Mucosa of descending colon (tissue), 3 donors: ENCODE measurements at regions of chr9 and their contacts with region 1.

Region 1: GRCh38 chr9:78357165-78357873 is 60.4 kb downstream of the PSAT1 start:
- DNase-seq: no peak
- ATAC-seq: no peak
- H3K4me3 ChIP-seq: no peak overlapping the region
- H3K4me1 ChIP-seq: no peaks in the 10 kb centered on the region
- CTCF ChIP-seq: no peak

Region 2: DNA sequence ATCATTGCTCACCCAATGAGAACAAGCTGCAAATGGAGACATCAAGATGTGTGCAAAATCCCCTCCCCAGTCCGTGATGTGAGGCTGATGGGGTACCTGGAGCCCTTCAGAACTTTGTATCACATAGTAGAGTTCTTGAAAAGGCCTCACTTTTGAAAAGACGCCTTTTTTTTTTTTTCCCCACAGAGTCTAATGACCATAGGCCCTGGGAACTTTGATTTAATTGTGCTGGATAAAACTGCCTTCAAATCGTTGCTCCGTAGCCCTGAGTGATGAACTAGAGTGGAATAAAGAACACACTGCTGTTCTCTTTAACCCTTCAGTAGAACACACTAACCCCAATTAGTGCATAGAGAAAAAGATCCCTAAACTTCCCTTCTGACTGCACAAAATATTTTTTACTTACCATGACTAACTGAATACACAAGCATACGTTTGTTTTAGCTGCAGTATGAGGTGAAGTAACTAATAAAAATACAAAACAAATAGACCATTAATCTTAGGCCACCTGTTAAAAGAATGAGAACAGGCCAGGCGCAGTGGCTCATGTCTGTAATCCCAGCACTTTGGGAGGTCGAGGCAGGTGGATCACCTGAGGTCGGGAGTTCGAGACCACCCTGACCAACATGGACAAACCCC is 45.3 kb before region 1 on chr9:
- intact Hi-C with region 1: loop called in 1 of 2 experiments (anchors 2 kb)
- DNase-seq: no peak
- ATAC-seq: peak; percentile 19
- H3K4me3 ChIP-seq: no peak overlapping the region
- H3K4me1 ChIP-seq: no peaks in the 10 kb centered on the region
- CTCF ChIP-seq: no peak

Region 3: DNA sequence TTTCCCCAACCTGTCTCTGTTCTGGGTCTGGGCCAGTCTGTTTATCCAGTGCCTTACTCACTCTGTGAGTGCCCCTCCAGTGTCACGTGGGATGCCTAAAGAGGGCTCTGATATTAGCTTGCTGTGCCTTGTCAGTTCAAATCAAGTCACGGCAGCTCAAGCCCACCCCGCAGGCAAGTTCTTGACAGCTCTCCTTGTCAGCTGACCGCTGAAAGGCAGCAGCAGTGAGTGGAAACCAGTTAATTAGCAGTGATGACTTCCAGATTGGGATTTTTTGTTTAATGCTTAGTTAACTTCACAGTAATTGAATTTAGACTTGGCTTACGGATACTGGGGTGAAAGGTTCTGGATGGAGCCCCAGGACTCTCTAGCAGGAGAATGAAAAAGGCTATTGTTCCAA is 149.7 kb after region 1 on chr9:
- intact Hi-C with region 1: no loop called
- DNase-seq: no peak
- ATAC-seq: no peak
- H3K4me3 ChIP-seq: no peak overlapping the region
- H3K4me1 ChIP-seq: no peaks in the 10 kb centered on the region
- CTCF ChIP-seq: no peak

Region 4: DNA sequence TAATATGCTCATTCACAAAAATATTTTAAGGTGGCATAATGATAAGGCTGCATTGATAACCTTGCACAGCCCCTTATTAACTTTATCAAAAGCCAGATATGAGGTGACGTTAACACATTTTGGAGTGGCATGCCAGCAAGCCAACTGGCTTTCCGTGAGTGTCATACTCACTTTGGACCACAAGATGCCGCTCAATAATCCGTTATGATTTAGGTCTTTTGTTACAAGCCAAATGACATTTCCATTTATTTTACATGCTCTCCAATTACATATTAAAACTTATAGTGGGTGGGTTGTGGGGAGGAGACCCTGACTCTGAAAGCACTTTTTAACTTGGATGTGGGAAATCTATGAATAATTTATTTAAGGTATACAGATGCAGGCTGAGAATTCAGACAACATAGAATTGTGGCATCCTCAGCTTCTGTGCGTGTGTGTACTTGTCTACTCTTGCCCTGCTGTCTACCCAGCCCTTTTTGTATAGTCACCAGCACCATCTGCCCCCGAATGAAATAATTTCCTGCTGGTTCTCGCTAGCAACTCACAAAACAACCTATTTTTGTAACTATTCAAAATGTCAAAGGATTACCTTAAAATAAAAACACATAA is 244.7 kb after region 1 on chr9:
- intact Hi-C with region 1: no loop called
- DNase-seq: peak in 1 of 3 donors; percentile 10
- ATAC-seq: no peak
- H3K4me3 ChIP-seq: no peak overlapping the region
- H3K4me1 ChIP-seq: no peaks in the 10 kb centered on the region
- CTCF ChIP-seq: no peak